ENCODE measurements at regions of chr12 and their contacts with region 1.

Region 1: DNA sequence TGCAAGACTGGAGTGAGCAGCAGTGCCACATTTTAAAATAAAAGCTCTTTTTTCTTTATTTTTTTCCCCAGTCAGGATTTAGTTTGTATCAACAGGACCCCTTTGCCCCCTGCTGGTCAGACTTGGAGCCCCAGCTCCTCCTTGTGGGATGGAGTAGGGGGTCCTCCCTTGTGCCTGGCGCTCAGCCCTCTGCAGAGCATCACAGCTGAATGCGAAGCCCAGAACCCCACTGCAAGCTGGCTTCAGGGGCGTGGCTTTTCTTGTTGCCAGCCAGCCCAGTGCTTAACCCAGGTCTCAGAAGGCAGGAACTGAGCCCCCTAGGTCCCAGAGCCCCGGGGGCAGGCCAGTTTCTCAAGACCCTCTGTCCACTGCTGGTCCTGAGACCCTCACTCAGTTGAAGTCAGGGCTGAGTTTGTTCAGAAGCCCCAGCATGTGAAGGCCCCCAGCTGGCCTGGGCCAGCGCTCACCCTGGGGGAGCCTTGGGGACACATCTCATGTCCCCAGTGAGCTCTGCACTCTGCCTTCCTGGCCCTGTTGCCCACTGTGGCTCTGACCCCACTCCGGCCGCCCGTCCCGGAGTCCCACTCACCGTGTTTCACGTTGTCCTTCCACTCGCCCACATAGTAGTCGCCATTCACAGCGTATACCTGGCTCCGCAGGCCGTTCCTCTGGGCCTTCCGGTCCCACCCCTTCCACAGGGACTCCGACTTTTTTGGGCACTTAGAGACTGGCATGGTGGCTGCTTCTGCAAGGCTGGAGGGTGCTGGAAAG is 519 bp downstream of the MORN3 start:
- DNase-seq: peak; percentile 67
- ATAC-seq: no peak
- H3K4me3 ChIP-seq: no peak overlapping the region
- H3K4me3 Mint-ChIP-seq: no peak overlapping the region
- H3K27ac ChIP-seq: no peak overlapping the region
- H3K27ac Mint-ChIP-seq: peak overlapping the region; percentile 61
- H3K4me1 ChIP-seq: peaks cover 30 to 52% of the 10 kb centered on the region in 2 donors
- H3K4me1 Mint-ChIP-seq: peaks cover 42% of the 10 kb centered on the region
- H3K27me3 ChIP-seq: no peaks in the 10 kb centered on the region
- H3K27me3 Mint-ChIP-seq: no peaks in the 10 kb centered on the region
- CTCF ChIP-seq: peak; percentile 78

Region 2: GRCh38 chr12:121334513-121335343 is 334.2 kb before region 1 on chr12:
- CTCF ChIA-PET with region 1: no interaction called
- POLR2A ChIA-PET with region 1: no interaction called
- intact Hi-C with region 1: no loop called
- DNase-seq: peak; percentile 70
- ATAC-seq: peak; percentile 73
- H3K4me3 ChIP-seq: no peak overlapping the region
- H3K4me3 Mint-ChIP-seq: no peak overlapping the region
- H3K27ac ChIP-seq: no peak overlapping the region
- H3K27ac Mint-ChIP-seq: no peak overlapping the region
- H3K4me1 ChIP-seq: no peaks in the 10 kb centered on the region
- H3K4me1 Mint-ChIP-seq: peaks cover 3% of the 10 kb centered on the region
- H3K27me3 ChIP-seq: no peaks in the 10 kb centered on the region
- H3K27me3 Mint-ChIP-seq: no peaks in the 10 kb centered on the region
- CTCF ChIP-seq: peak; percentile 92

Region 3: DNA sequence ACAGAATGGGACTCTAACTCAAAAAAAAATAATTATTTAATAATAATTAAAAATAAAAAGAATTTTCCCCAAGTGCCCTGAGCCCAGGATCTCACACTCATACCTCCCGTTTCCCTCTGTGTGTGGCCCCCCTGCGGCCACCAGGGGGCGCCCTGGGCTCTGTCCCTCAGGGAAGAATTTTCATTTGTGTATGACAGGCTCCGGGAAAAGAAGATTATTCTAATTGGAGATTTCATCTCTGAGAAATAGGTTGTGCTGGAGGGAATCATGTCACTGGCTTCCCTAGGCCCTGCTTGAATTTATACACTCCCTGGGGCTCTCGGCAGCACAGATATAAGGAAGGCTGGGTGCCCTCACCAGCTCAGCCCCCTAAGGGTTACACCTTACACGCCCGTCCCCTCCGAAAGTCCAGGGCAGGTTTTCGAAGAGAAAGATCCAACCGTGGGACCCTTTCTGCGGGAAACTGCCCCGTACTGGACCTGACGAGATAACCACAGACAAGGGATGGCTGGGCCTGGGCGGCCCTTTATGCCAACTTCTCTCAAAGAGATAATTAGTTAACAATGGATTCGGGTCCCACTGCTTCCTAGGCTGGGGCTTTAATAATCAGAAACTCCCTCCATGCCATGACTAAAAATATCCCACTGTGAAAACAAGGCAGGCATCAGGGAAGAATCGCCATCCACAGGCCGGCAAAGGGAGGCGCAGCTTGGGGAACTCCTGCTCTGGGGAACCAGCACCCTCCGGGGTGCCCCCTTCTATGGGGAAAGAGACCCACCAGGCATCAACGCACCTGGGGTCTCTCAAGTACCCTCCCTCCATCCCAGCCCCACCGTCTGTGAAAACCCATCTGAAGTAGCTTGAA is 168.8 kb before region 1 on chr12:
- CTCF ChIA-PET with region 1: interaction called, 60 read pairs
- POLR2A ChIA-PET with region 1: interaction called, 3 read pairs
- intact Hi-C with region 1: loop called (anchors 5 kb)
- DNase-seq: peak; percentile 82
- ATAC-seq: peak; percentile 91
- H3K4me3 ChIP-seq: no peak overlapping the region
- H3K4me3 Mint-ChIP-seq: no peak overlapping the region
- H3K27ac ChIP-seq: no peak overlapping the region
- H3K27ac Mint-ChIP-seq: no peak overlapping the region
- H3K4me1 ChIP-seq: peaks cover 10 to 19% of the 10 kb centered on the region in 2 donors
- H3K4me1 Mint-ChIP-seq: peaks cover 16% of the 10 kb centered on the region
- H3K27me3 ChIP-seq: no peaks in the 10 kb centered on the region
- H3K27me3 Mint-ChIP-seq: no peaks in the 10 kb centered on the region
- CTCF ChIP-seq: peak; percentile 99

Region 4: DNA sequence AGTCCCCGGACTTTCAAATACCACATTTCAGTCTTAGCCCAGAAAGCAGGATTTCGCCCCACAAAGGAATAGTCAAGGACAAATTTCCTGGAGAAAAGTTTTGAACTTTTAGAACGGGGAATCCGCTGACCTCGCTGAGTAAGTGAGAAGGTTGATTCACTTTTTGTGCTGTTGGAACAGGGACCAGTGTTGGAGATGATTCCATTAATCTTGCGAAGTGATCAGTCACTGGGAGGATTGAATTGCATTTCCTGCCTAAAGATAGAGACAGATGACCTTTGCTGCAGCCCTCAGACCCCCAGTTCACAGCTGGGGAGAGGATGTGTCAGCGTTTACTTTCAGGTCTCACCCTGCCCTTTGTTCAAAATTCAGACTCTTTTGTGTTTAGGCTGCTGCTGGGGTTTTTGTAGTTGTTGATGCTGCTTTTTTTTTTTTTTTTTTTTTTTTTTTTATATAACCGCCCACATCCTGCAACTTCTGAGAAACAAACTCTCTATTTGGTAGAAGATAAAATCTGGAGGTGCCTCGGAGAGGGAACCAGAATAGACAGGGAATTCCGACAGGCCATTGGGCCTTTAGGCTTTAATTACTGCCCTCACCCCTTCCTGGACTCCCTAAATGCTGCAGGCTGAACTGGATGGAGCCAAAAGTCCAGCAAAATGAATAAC is 78.3 kb before region 1 on chr12:
- CTCF ChIA-PET with region 1: interaction called, 6 read pairs
- POLR2A ChIA-PET with region 1: interaction called, 5 read pairs
- intact Hi-C with region 1: loop called (anchors 1 kb)
- DNase-seq: peak; percentile 82
- ATAC-seq: peak; percentile 67
- H3K4me3 ChIP-seq: peak overlapping the region; percentile 15 to 61 (median 47)
- H3K4me3 Mint-ChIP-seq: peak overlapping the region; percentile 92
- H3K27ac ChIP-seq: peak overlapping the region; percentile 96 to 99
- H3K27ac Mint-ChIP-seq: peak overlapping the region; percentile 100
- H3K4me1 ChIP-seq: peaks cover 26 to 37% of the 10 kb centered on the region in 2 donors
- H3K4me1 Mint-ChIP-seq: peaks cover 34% of the 10 kb centered on the region
- H3K27me3 ChIP-seq: no peaks in the 10 kb centered on the region
- H3K27me3 Mint-ChIP-seq: no peaks in the 10 kb centered on the region
- CTCF ChIP-seq: no peak

Region 5: GRCh38 chr12:121657305-121658008 is 11.5 kb before region 1 on chr12:
- CTCF ChIA-PET with region 1: interaction called, 22 read pairs
- POLR2A ChIA-PET with region 1: interaction called, 3 read pairs
- intact Hi-C with region 1: no loop called
- DNase-seq: no peak
- ATAC-seq: no peak
- H3K4me3 ChIP-seq: no peak overlapping the region
- H3K4me3 Mint-ChIP-seq: peak overlapping the region; percentile 73
- H3K27ac ChIP-seq: no peak overlapping the region
- H3K27ac Mint-ChIP-seq: peak overlapping the region; percentile 76
- H3K4me1 ChIP-seq: peaks cover 16 to 19% of the 10 kb centered on the region in 2 donors
- H3K4me1 Mint-ChIP-seq: peaks cover 28% of the 10 kb centered on the region
- H3K27me3 ChIP-seq: no peaks in the 10 kb centered on the region
- H3K27me3 Mint-ChIP-seq: no peaks in the 10 kb centered on the region
- CTCF ChIP-seq: no peak

Region 6: DNA sequence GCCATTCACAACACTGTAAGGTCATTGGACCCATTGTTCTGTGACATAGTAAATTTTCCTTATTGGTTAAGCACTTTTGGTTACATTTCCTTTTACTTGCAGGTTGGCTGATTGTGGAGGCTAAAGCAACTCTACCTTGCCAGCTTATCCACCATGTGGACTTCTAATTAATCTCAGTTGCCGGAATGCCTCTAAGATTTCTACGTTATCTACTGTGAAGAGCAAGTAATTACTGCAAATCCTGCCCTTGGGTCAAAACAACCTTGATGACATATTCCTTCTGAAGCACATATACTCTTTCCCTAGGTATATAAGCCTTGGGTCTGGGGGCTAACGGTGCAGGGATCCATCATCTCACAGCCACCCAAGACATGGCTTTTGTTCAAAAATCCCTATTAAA is 20.0 kb after region 1 on chr12:
- CTCF ChIA-PET with region 1: interaction called, 3 read pairs
- POLR2A ChIA-PET with region 1: interaction called, 9 read pairs
- intact Hi-C with region 1: loop called (anchors 1 kb)
- DNase-seq: no peak
- ATAC-seq: no peak
- H3K4me3 ChIP-seq: no peak overlapping the region
- H3K4me3 Mint-ChIP-seq: no peak overlapping the region
- H3K27ac ChIP-seq: no peak overlapping the region
- H3K27ac Mint-ChIP-seq: peak overlapping the region; percentile 10
- H3K4me1 ChIP-seq: peaks cover 4 to 16% of the 10 kb centered on the region in 2 donors
- H3K4me1 Mint-ChIP-seq: peaks cover 8% of the 10 kb centered on the region
- H3K27me3 ChIP-seq: no peaks in the 10 kb centered on the region
- H3K27me3 Mint-ChIP-seq: no peaks in the 10 kb centered on the region
- CTCF ChIP-seq: no peak

Region 7: DNA sequence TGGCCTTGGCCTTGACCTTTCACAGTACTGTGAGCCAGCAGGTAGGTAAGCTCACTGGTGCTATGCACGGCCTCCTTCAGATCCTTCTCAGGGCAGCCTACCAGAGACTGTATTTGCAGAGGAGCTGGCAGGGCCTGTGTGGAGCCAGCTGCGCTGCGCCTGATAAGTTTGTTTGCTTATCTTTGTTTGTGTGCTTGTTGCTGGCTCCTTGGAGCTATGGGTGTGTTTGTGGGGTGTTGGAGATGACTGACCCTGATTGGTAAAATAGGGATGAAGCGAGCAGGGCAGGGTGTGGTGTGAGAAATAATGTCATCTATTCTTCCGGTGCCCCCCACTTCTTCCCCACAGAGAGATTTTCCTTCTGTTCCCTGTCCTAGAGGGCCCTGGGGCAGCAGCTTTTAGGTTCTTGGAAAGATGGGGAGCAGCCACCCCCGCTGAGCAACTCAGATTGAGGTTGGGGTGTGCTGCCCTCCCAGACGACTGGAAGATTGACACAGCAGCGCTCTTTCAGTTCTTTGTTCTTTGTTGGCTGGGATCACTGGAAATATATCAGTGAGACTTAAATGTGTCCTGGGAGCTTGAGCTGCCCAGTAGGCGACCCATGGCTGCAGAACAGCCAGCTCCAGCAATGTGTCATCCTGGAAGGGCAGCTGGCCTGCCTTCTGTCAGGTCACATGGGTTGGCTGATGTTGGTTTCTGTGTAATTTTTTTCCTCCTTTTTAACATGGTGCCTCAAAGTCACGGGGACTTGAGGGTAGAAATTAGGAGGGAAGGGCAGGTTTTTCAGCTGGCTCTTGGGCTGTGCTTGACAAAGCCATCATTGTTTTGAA is 429.2 kb after region 1 on chr12:
- CTCF ChIA-PET with region 1: no interaction called
- POLR2A ChIA-PET with region 1: no interaction called
- intact Hi-C with region 1: no loop called
- DNase-seq: no peak
- ATAC-seq: no peak
- H3K4me3 ChIP-seq: no peak overlapping the region
- H3K4me3 Mint-ChIP-seq: no peak overlapping the region
- H3K27ac ChIP-seq: peak overlapping the region in 1 of 2 donors; percentile 11
- H3K27ac Mint-ChIP-seq: peak overlapping the region; percentile 71
- H3K4me1 ChIP-seq: peaks cover 28 to 31% of the 10 kb centered on the region in 2 donors
- H3K4me1 Mint-ChIP-seq: peaks cover 48% of the 10 kb centered on the region
- H3K27me3 ChIP-seq: no peaks in the 10 kb centered on the region
- H3K27me3 Mint-ChIP-seq: no peaks in the 10 kb centered on the region
- CTCF ChIP-seq: no peak

Measured in B cell (primary cell).